Left cardiac atrium (tissue), 4 donors: ENCODE measurements at regions of chr5 and their contacts with region 1.

Region 1: DNA sequence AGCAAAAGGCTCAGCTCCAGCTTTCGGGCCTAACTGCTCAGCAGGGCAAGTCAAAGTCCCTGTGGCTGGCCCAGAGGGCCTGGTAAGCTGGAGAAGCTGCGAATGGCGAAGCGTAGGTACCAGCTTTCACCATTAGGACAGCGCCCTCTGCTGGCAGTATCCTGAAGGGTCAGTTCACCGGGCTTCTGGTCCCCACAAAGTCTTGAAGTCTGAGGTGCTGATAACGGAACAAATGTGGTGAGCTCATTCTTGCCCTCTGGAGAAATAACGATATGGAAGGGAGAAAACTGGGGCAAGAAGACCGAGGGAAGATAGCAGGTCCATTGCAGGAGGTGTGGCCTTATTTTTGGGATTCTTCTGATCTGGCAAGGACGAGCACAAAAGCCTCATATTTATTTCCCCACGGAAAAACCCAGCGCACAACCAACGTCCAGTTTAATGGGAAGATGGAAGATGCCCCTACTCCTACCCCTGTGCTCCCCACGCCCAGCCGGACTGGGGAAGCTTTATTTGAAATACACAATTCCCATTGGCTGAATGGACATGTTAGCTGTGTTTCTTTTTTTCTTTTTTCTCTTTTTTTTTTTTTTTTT is 7.2 kb downstream of the SOWAHA start:
- DNase-seq: peak; percentile 92
- ATAC-seq: peak; percentile 85 to 88

Region 2: DNA sequence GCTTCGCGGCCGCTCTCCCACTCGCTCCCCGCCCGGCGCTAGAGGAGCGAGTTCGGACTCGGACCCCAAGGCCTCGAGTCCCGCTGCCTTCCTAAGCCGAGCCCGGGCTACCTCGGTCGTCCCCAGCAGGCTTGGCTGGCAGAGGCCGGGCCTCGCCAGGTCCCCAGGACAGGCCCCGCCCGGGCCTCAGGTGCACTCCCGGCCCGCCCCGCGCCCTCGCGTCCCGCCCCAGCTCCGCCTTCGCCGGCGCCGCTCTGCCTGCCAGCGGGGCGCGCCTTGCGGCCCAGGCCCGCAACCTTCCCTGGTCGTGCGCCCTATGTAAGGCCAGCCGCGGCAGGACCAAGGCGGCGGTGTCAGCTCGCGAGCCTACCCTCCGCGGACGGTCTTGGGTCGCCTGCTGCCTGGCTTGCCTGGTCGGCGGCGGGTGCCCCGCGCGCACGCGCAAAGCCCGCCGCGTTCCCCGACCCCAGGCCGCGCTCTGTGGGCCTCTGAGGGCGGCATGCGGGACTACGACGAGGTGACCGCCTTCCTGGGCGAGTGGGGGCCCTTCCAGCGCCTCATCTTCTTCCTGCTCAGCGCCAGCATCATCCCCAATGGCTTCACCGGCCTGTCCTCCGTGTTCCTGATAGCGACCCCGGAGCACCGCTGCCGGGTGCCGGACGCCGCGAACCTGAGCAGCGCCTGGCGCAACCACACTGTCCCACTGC is 450.6 kb before region 1 on chr5 and contains the start of gene SLC22A5:
- intact Hi-C with region 1: loop called in 1 of 2 experiments (anchors 10 kb)
- DNase-seq: peak; percentile 73
- ATAC-seq: peak; percentile 86 to 87
- total RNA-seq, gene SLC22A5: 7.9 to 15.3 TPM

Region 3: DNA sequence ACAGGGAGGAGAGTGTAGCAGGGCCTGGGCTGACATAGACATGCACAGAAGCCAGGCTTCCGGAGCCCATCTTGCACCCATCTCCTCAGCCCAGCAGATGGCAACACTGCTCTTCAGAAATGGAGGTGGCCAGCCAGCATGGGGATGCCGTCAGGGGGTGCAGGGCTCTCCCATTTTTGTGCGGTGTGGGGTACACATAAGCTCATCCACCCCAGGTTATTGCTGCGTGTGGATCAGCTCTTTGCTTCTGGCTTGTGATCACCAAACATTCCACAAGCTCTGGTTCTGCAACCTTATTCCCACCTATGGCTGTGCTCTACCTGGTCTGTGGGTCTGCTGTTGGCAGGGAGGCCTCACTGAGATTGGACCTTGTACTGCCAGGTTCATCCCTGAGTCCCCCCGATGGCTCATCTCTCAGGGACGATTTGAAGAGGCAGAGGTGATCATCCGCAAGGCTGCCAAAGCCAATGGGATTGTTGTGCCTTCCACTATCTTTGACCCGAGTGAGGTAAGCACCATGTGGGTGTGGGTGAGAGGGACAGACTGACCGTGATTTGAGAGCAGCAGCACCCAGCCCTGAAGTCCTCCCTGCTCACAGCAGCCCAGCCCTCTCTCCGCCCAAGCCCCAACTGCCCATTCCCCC is 433.5 kb before region 1 on chr5:
- intact Hi-C with region 1: loop called in 1 of 2 experiments (anchors 5 kb)
- DNase-seq: peak; percentile 78
- ATAC-seq: peak; percentile 83 to 86

Region 4: GRCh38 chr5:133316427-133316826 is 496.2 kb after region 1 on chr5:
- intact Hi-C with region 1: no loop called
- DNase-seq: no peak
- ATAC-seq: no peak